CD4-positive, alpha-beta memory T cell (primary cell): ENCODE measurements at regions of chr15 and their contacts with region 1.

Region 1: DNA sequence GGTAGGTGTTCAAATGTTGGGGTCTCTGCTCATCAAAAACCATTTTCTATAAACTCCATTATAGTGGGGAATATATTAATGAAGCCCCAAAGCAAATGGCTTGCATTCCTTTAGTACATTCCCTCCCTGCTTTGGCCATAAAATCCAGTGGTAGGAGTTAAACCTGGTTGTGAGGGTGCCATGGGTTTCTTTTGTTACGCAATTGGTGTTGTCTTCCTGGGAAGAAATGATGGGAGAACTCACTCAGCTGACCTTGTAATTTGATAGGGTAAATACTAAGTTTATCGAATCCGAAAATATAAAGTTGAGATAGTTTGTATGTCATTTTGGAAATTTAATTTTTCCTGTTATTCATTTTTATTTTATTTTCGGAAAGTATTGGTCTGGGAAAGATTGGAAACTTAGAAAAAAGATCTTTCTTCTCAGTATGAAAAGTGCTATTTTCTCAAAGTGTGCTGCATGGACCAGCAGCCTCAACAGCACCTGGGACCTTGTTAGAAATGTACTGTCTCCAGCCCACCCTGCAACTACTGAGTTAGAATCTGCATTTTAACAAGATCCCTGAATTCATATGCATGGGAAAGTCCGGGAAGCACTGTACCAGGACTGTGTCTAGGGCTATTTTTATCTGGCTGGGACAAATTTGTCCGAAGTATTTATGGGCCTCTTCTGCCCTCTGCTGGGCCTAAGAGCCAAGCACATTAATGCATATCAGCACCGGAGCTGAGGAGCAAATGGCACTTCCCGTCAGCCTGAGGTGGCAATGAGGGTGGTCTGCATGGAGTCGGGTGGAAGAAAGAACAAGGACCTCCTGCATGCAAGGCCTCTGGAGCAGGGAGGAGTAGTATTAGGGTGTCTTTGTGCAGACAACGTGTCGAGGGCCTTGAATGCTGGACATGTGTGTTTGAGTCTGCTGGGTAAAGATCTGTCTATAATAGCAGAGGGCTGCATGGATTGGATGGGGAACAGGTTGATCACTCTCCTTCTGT is 54.7 kb downstream of the FAM81A start:
- DNase-seq: peak; percentile 49 to 59 (median 55)
- H3K4me3 ChIP-seq: no peak overlapping the region
- H3K4me3 Mint-ChIP-seq: no peak overlapping the region
- H3K27ac ChIP-seq: no peak overlapping the region
- H3K27ac Mint-ChIP-seq: no peak overlapping the region
- H3K4me1 ChIP-seq: no peaks in the 10 kb centered on the region
- H3K4me1 Mint-ChIP-seq: peaks cover 0 to 5% (median 2%) of the 10 kb centered on the region in 4 donors
- H3K27me3 ChIP-seq: no peaks in the 10 kb centered on the region
- H3K27me3 Mint-ChIP-seq: no peaks in the 10 kb centered on the region

Region 2: GRCh38 chr15:58227706-58228543 is 1264.8 kb before region 1 on chr15:
- CTCF ChIA-PET with region 1: interaction called, 10 read pairs
- POLR2A ChIA-PET with region 1: no interaction called
- intact Hi-C with region 1: no loop called
- DNase-seq: peak in 4 of 5 donors; percentile 49 to 58 (median 54)
- H3K4me3 ChIP-seq: no peak overlapping the region
- H3K4me3 Mint-ChIP-seq: no peak overlapping the region
- H3K27ac ChIP-seq: no peak overlapping the region
- H3K27ac Mint-ChIP-seq: no peak overlapping the region
- H3K4me1 ChIP-seq: no peaks in the 10 kb centered on the region
- H3K4me1 Mint-ChIP-seq: peaks cover 4 to 14% (median 11%) of the 10 kb centered on the region in 4 donors
- H3K27me3 ChIP-seq: no peaks in the 10 kb centered on the region
- H3K27me3 Mint-ChIP-seq: peaks cover 7 to 17% of the 10 kb centered on the region in 2 donors

Region 3: GRCh38 chr15:58957101-58957973 is 535.3 kb before region 1 on chr15:
- CTCF ChIA-PET with region 1: interaction called, 25 read pairs
- POLR2A ChIA-PET with region 1: no interaction called
- intact Hi-C with region 1: loop called (anchors 1 kb)
- DNase-seq: peak; percentile 63 to 69 (median 66)
- H3K4me3 ChIP-seq: no peak overlapping the region
- H3K4me3 Mint-ChIP-seq: peak overlapping the region in 1 of 8 donors; percentile 41
- H3K27ac ChIP-seq: no peak overlapping the region
- H3K27ac Mint-ChIP-seq: peak overlapping the region in 2 of 7 donors; percentile 70 to 84
- H3K4me1 ChIP-seq: peaks cover 4% of the 10 kb centered on the region
- H3K4me1 Mint-ChIP-seq: peaks cover 5 to 6% (median 6%) of the 10 kb centered on the region in 4 donors
- H3K27me3 ChIP-seq: no peaks in the 10 kb centered on the region
- H3K27me3 Mint-ChIP-seq: peaks cover 0 to 1% of the 10 kb centered on the region in 2 donors

Region 4: GRCh38 chr15:58980351-58980939 is 512.2 kb before region 1 on chr15:
- CTCF ChIA-PET with region 1: interaction called, 22 read pairs
- POLR2A ChIA-PET with region 1: no interaction called
- intact Hi-C with region 1: loop called (anchors 1 kb)
- DNase-seq: peak in 4 of 5 donors; percentile 41 to 51 (median 44)
- H3K4me3 ChIP-seq: no peak overlapping the region
- H3K4me3 Mint-ChIP-seq: peak overlapping the region in 2 of 8 donors; percentile 1 to 78
- H3K27ac ChIP-seq: no peak overlapping the region
- H3K27ac Mint-ChIP-seq: peak overlapping the region in 3 of 7 donors; percentile 22 to 68 (median 29)
- H3K4me1 ChIP-seq: peaks cover 30% of the 10 kb centered on the region
- H3K4me1 Mint-ChIP-seq: peaks cover 16 to 28% (median 22%) of the 10 kb centered on the region in 4 donors
- H3K27me3 ChIP-seq: no peaks in the 10 kb centered on the region
- H3K27me3 Mint-ChIP-seq: no peaks in the 10 kb centered on the region

Region 5: GRCh38 chr15:59160880-59161593 is 331.6 kb before region 1 on chr15:
- CTCF ChIA-PET with region 1: no interaction called
- POLR2A ChIA-PET with region 1: no interaction called
- intact Hi-C with region 1: loop called (anchors 5 kb)
- DNase-seq: no peak
- H3K4me3 ChIP-seq: no peak overlapping the region
- H3K4me3 Mint-ChIP-seq: no peak overlapping the region
- H3K27ac ChIP-seq: no peak overlapping the region
- H3K27ac Mint-ChIP-seq: no peak overlapping the region
- H3K4me1 ChIP-seq: no peaks in the 10 kb centered on the region
- H3K4me1 Mint-ChIP-seq: no peaks in the 10 kb centered on the region
- H3K27me3 ChIP-seq: no peaks in the 10 kb centered on the region
- H3K27me3 Mint-ChIP-seq: no peaks in the 10 kb centered on the region

Region 6: GRCh38 chr15:59174835-59175831 is 317.6 kb before region 1 on chr15:
- CTCF ChIA-PET with region 1: interaction called, 4 read pairs
- POLR2A ChIA-PET with region 1: no interaction called
- intact Hi-C with region 1: loop called (anchors 2 kb)
- DNase-seq: peak in 4 of 5 donors; percentile 3 to 22 (median 13)
- H3K4me3 ChIP-seq: no peak overlapping the region
- H3K4me3 Mint-ChIP-seq: no peak overlapping the region
- H3K27ac ChIP-seq: no peak overlapping the region
- H3K27ac Mint-ChIP-seq: no peak overlapping the region
- H3K4me1 ChIP-seq: no peaks in the 10 kb centered on the region
- H3K4me1 Mint-ChIP-seq: no peaks in the 10 kb centered on the region
- H3K27me3 ChIP-seq: no peaks in the 10 kb centered on the region
- H3K27me3 Mint-ChIP-seq: peaks cover 1 to 13% of the 10 kb centered on the region in 2 donors

Region 7: DNA sequence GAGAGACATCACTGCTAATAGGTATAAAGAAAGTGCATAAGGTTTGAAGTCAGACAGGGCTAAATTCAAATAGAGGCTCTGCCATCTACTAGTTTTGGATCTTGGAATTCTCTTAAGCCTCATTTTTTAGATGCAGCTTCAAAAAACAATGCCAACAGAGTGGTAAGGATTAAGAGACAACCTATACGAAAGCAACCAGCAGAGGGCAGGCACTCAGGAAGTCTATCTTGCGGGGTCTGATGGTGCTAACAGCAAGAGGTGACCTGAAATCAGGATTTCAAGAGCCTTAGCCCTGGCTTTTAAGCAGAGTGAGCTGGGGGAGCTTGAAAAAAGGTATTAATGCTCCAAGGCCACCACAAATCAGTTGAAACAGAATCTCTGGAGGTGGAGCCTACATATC is 245.3 kb before region 1 on chr15:
- CTCF ChIA-PET with region 1: interaction called, 12 read pairs
- POLR2A ChIA-PET with region 1: no interaction called
- intact Hi-C with region 1: loop called (anchors 1 kb)
- DNase-seq: peak; percentile 26 to 43 (median 36)
- H3K4me3 ChIP-seq: no peak overlapping the region
- H3K4me3 Mint-ChIP-seq: no peak overlapping the region
- H3K27ac ChIP-seq: no peak overlapping the region
- H3K27ac Mint-ChIP-seq: no peak overlapping the region
- H3K4me1 ChIP-seq: peaks cover 6% of the 10 kb centered on the region
- H3K4me1 Mint-ChIP-seq: peaks cover 0 to 4% (median 2%) of the 10 kb centered on the region in 4 donors
- H3K27me3 ChIP-seq: no peaks in the 10 kb centered on the region
- H3K27me3 Mint-ChIP-seq: no peaks in the 10 kb centered on the region

Region 8: GRCh38 chr15:59283717-59284336 is 208.9 kb before region 1 on chr15:
- CTCF ChIA-PET with region 1: no interaction called
- POLR2A ChIA-PET with region 1: no interaction called
- intact Hi-C with region 1: no loop called
- DNase-seq: no peak
- H3K4me3 ChIP-seq: no peak overlapping the region
- H3K4me3 Mint-ChIP-seq: no peak overlapping the region
- H3K27ac ChIP-seq: no peak overlapping the region
- H3K27ac Mint-ChIP-seq: no peak overlapping the region
- H3K4me1 ChIP-seq: no peaks in the 10 kb centered on the region
- H3K4me1 Mint-ChIP-seq: no peaks in the 10 kb centered on the region
- H3K27me3 ChIP-seq: no peaks in the 10 kb centered on the region
- H3K27me3 Mint-ChIP-seq: peaks cover 0 to 3% of the 10 kb centered on the region in 2 donors

Region 9: GRCh38 chr15:59516655-59517461 is 24.2 kb after region 1 on chr15:
- CTCF ChIA-PET with region 1: no interaction called
- POLR2A ChIA-PET with region 1: no interaction called
- intact Hi-C with region 1: no loop called
- DNase-seq: no peak
- H3K4me3 ChIP-seq: no peak overlapping the region
- H3K4me3 Mint-ChIP-seq: no peak overlapping the region
- H3K27ac ChIP-seq: no peak overlapping the region
- H3K27ac Mint-ChIP-seq: peak overlapping the region in 2 of 7 donors; percentile 1 to 73
- H3K4me1 ChIP-seq: no peaks in the 10 kb centered on the region
- H3K4me1 Mint-ChIP-seq: peaks cover 0 to 3% (median 1%) of the 10 kb centered on the region in 4 donors
- H3K27me3 ChIP-seq: no peaks in the 10 kb centered on the region
- H3K27me3 Mint-ChIP-seq: peaks cover 2% of the 10 kb centered on the region in 2 donors

Region 10: DNA sequence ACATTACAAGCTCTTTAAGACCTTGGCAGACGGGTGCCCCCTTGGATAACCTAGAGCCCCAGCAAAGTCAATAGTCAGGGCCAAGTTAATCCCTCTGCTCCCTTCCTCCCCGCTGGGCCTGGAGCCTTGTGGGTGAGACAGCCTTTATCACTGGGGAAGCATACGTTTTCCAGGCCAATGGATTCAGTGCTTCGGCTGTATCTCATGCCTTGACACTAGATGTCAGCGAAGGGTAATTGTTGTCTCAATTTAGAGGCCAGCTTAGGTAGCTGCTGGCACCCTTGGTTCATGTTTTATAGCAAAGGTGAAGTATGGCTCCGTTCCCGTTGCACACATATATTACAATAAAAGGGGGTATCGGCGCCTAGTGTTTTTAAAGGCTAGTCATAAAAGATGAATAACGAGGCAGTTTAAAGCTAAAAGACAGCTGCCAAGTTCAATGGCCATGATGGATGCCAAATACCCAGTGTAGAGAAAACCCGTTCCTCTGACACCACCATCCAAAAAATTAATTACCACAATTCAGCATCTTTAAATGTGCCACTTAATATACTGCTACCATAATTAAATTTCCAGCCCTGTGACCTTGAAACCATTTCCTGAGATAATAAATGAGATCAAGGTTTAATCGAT is 248.7 kb after region 1 on chr15:
- CTCF ChIA-PET with region 1: no interaction called
- POLR2A ChIA-PET with region 1: no interaction called
- intact Hi-C with region 1: no loop called
- DNase-seq: no peak
- H3K4me3 ChIP-seq: no peak overlapping the region
- H3K4me3 Mint-ChIP-seq: no peak overlapping the region
- H3K27ac ChIP-seq: no peak overlapping the region
- H3K27ac Mint-ChIP-seq: no peak overlapping the region
- H3K4me1 ChIP-seq: no peaks in the 10 kb centered on the region
- H3K4me1 Mint-ChIP-seq: peaks cover 0 to 2% (median 0%) of the 10 kb centered on the region in 4 donors
- H3K27me3 ChIP-seq: no peaks in the 10 kb centered on the region
- H3K27me3 Mint-ChIP-seq: peaks cover 10 to 18% of the 10 kb centered on the region in 2 donors

Region 11: DNA sequence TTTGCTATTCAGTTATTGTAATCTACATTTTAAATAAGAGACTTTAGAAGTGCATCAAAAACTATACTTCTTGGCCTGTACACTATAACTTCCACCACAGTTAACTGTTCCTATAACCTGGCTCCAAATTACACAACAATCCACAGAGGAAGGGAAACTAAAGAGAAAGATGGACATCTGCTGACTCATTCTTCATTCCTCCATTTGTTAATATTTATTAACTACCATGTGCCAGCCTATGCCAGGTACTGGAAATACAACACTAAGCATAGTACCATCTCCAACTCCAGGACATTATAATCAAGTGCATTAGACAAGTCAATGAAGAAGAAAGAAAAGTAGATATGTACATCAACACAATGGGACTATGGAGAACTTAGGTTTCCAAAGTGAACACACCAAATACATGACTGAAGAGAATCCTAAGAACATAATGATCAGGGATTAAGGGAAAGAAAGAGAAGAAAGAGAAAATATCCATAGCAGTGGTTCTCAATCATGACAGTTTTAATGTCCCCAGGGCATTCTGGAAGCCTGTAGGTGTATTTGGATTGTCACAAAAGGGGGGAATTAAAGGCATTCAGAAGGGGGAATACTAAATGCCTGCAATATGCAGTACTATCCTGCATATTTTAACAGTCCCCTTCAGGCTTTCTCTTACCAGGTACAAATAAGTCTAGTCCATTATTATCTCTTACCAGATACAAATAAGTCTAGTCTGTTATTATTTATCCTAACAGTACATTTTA is 977.4 kb after region 1 on chr15:
- CTCF ChIA-PET with region 1: no interaction called
- POLR2A ChIA-PET with region 1: no interaction called
- intact Hi-C with region 1: no loop called
- DNase-seq: no peak
- H3K4me3 ChIP-seq: no peak overlapping the region
- H3K4me3 Mint-ChIP-seq: no peak overlapping the region
- H3K27ac ChIP-seq: no peak overlapping the region
- H3K27ac Mint-ChIP-seq: peak overlapping the region in 1 of 7 donors; percentile 4
- H3K4me1 ChIP-seq: no peaks in the 10 kb centered on the region
- H3K4me1 Mint-ChIP-seq: peaks cover 11 to 19% (median 14%) of the 10 kb centered on the region in 4 donors
- H3K27me3 ChIP-seq: no peaks in the 10 kb centered on the region
- H3K27me3 Mint-ChIP-seq: no peaks in the 10 kb centered on the region